H1 (cell line): ENCODE measurements at regions of chr17 and their contacts with region 1.

Region 1: GRCh38 chr17:164303-165235 is 16.9 kb downstream of the DOC2B start:
- DNase-seq: peak in 1 of 2 experiments; percentile 66
- H3K4me3 ChIP-seq: no peak overlapping the region
- H3K27ac ChIP-seq: no peak overlapping the region
- H3K4me1 ChIP-seq: no peaks in the 10 kb centered on the region; a peak in 1 of 7 replicates
- H3K27me3 ChIP-seq: no peaks in the 10 kb centered on the region
- CTCF ChIP-seq: peak; percentile 68 to 79 (median 71)
- EP300 ChIP-seq: no peak
- POLR2A ChIP-seq: no peak
- RAD21 ChIP-seq: peak; percentile 87 to 88

Region 2: DNA sequence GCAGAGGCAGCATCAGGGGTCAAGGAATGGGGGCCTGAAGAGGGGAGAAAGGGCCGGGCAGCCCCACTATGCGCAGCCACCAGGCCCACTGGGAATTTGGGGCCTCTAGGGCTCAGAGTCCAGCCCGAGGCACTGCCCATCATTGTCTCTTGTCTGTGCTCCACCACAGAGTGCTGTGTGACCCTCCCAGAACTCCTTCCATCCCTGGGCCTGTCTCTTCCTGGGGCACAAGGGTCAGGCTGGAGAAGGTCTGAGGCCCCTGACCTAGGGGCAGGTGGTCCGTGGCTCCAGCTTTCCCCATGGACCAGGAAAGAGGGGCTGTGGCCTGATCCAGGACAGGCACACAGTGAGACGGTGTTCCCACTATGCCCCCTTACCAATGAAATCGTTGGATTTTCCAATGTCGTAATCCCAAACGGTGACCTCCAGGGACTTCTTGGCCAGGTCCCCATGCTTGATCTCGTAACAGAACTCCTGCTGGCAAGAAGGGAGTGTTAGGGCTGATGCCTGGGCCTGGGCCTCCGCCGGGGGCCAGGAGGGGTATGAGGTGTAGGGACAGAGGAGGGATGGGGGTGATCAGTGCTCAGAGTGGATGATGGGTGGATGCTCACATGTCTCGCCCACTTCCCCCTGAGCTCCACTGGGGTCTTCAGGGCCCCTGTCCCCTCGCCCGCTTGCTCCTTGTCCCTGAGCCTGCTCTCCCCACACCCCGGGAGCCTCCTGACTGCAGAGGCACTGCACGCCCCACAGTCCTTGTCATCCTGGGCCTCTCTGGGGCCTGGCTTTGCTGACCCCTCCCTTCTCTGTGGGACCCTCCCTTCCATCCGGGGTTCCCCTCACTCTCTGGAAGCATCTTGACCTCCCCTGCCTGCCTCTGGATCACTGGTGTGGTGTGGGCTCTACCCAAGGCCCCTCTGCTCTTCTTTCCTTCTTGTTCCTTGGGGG is 16.5 kb before region 1 on chr17:
- CTCF ChIA-PET with region 1: interaction called, 20 read pairs
- POLR2A ChIA-PET with region 1: no interaction called
- DNase-seq: peak in 1 of 2 experiments; percentile 32
- H3K4me3 ChIP-seq: no peak overlapping the region
- H3K27ac ChIP-seq: no peak overlapping the region
- H3K4me1 ChIP-seq: peaks cover 0 to 2% (median 0%) of the 10 kb centered on the region in 4 experiments; a peak in 1 of 7 replicates
- H3K27me3 ChIP-seq: peaks cover 1 to 7% (median 5%) of the 10 kb centered on the region in 4 experiments; a peak in 5 of 7 replicates
- CTCF ChIP-seq: no peak
- EP300 ChIP-seq: no peak
- POLR2A ChIP-seq: no peak
- RAD21 ChIP-seq: no peak

Region 3: DNA sequence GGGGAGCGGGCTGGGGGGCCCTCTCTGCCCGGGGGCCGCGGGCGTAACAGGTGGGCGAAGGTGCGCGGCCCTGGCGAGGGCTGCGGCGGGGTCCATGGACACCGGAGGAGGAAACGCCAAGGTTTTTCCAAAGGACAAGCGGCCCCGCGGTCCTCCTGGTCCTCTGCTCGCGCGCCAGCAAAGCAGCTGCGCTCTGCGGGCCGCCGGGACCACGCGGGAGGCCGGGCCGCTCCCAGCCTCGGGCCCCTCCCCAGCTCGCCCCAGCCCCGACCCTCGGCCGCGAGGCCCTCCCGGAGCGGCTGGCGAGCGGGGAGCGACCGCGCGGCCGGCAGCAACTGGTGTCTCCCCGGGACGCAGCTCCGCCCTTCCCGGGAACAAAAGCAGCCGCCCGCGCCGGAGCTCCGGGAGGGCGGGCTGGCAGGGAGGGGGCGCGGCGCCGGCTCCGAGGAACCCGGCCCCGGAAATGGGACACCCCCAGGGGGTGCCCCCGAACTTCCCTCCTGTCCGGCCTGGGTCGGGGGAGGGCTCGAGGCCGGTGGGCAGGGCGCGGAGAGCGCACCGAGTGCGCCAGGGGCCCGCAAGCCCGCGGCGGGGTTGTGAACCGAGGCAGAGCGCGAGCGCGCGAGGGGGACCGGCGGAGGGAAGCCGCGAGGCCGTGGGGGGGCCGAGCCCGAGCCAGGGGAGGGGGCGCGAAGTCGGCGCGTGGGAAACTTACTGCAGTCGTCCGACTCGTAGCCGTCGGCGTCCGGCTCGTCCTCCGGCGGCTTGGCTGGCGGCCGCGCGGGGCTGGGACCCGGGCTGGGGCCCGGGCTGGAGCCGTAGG is 16.0 kb after region 1 on chr17:
- CTCF ChIA-PET with region 1: interaction called, 11 read pairs
- POLR2A ChIA-PET with region 1: interaction called, 5 read pairs
- DNase-seq: peak in 1 of 2 experiments; percentile 70
- H3K4me3 ChIP-seq: peak overlapping the region; percentile 30 to 73 (median 45)
- H3K27ac ChIP-seq: no peak overlapping the region
- H3K4me1 ChIP-seq: peaks cover 0 to 15% (median 10%) of the 10 kb centered on the region in 4 experiments; a peak in 6 of 7 replicates
- H3K27me3 ChIP-seq: peaks cover 19 to 62% (median 42%) of the 10 kb centered on the region in 4 experiments
- CTCF ChIP-seq: no peak
- EP300 ChIP-seq: no peak
- POLR2A ChIP-seq: no peak
- RAD21 ChIP-seq: no peak

Region 4: GRCh38 chr17:192666-193410 is 28.3 kb after region 1 on chr17:
- CTCF ChIA-PET with region 1: no interaction called
- POLR2A ChIA-PET with region 1: no interaction called
- DNase-seq: no peak
- H3K4me3 ChIP-seq: no peak overlapping the region
- H3K27ac ChIP-seq: no peak overlapping the region
- H3K4me1 ChIP-seq: peaks cover 0 to 3% (median 0%) of the 10 kb centered on the region in 4 experiments; a peak in 1 of 7 replicates
- H3K27me3 ChIP-seq: no peaks in the 10 kb centered on the region; a peak in 1 of 7 replicates
- CTCF ChIP-seq: no peak
- EP300 ChIP-seq: no peak
- POLR2A ChIP-seq: no peak
- RAD21 ChIP-seq: no peak

Region 5: DNA sequence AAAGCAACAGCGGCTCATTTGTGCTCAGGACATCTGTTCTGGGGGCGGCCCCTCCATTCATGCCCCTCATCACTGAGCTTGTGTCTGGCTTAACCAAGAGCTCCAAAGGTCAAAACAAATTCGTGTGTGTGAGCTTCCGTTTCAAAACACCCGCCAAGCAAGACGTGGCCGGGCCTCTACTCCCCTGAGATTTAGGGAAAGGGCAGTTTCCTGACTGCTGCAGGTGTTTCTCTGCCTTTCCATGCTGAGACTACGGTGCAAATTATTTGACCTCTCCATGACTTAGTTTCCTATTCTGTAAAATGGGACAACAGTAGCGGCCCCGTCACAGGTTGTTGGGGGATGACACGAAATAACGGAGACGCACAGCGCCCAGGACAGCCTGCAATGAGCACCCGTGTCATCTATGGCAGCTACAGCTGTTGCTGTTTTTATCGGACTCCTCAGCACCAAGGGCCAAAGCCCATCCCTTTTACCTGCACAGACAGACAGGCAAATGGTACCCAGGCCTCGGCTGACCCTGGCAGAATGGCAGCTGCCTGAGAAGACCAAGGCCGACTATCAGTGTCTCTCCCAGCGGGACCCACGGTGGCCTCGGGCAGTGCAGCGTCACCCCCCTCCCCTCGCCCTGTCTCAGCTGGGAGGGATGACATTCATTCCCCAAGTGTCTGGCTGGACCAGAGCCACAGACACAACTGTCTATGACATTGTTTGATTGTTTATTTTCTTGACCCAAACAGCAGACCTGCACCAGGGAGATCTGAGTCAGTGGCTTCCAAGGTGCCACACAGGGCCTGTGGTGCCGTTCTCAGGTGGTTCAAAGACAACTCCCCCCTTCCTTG is 67.6 kb after region 1 on chr17:
- CTCF ChIA-PET with region 1: interaction called, 11 read pairs
- POLR2A ChIA-PET with region 1: no interaction called
- DNase-seq: peak in 1 of 2 experiments; percentile 29
- H3K4me3 ChIP-seq: no peak overlapping the region
- H3K27ac ChIP-seq: no peak overlapping the region
- H3K4me1 ChIP-seq: peaks cover 0 to 26% (median 5%) of the 10 kb centered on the region in 4 experiments; a peak in 5 of 7 replicates
- H3K27me3 ChIP-seq: no peaks in the 10 kb centered on the region
- CTCF ChIP-seq: no peak
- EP300 ChIP-seq: no peak
- POLR2A ChIP-seq: no peak
- RAD21 ChIP-seq: no peak

Region 6: GRCh38 chr17:309361-309888 is 144.9 kb after region 1 on chr17:
- CTCF ChIA-PET with region 1: interaction called, 21 read pairs
- POLR2A ChIA-PET with region 1: no interaction called
- DNase-seq: peak; percentile 27 to 82
- H3K4me3 ChIP-seq: no peak overlapping the region
- H3K27ac ChIP-seq: no peak overlapping the region
- H3K4me1 ChIP-seq: peaks cover 4 to 26% (median 21%) of the 10 kb centered on the region in 4 experiments
- H3K27me3 ChIP-seq: peaks cover 0 to 1% (median 0%) of the 10 kb centered on the region in 4 experiments; a peak in 1 of 7 replicates
- CTCF ChIP-seq: peak; percentile 51 to 98 (median 79)
- EP300 ChIP-seq: no peak
- POLR2A ChIP-seq: no peak
- RAD21 ChIP-seq: peak; percentile 40 to 63; a peak in 3 of 4 replicates

Region 7: GRCh38 chr17:385926-386876 is 221.6 kb after region 1 on chr17:
- CTCF ChIA-PET with region 1: interaction called, 15 read pairs
- POLR2A ChIA-PET with region 1: no interaction called
- DNase-seq: peak in 1 of 2 experiments; percentile 92
- H3K4me3 ChIP-seq: peak overlapping the region; percentile 2 to 58 (median 22); a peak in 6 of 8 replicates
- H3K27ac ChIP-seq: no peak overlapping the region
- H3K4me1 ChIP-seq: peaks cover 5 to 26% (median 18%) of the 10 kb centered on the region in 4 experiments; a peak in 6 of 7 replicates
- H3K27me3 ChIP-seq: peaks cover 9 to 24% (median 22%) of the 10 kb centered on the region in 4 experiments
- CTCF ChIP-seq: peak; percentile 48 to 76 (median 69)
- EP300 ChIP-seq: 0 out of 3 replicates have a peak, but pooled peaks of 1 of the 2 experiments have one; percentile 24
- POLR2A ChIP-seq: no peak
- RAD21 ChIP-seq: peak; percentile 61 to 81

Region 8: GRCh38 chr17:700504-701094 is 536.0 kb after region 1 on chr17:
- CTCF ChIA-PET with region 1: interaction called, 15 read pairs
- POLR2A ChIA-PET with region 1: no interaction called
- DNase-seq: no peak
- H3K4me3 ChIP-seq: no peak overlapping the region
- H3K27ac ChIP-seq: no peak overlapping the region
- H3K4me1 ChIP-seq: no peaks in the 10 kb centered on the region
- H3K27me3 ChIP-seq: no peaks in the 10 kb centered on the region
- CTCF ChIP-seq: peak in 2 of 3 experiments; percentile 8 to 25; a peak in 2 of 4 replicates
- EP300 ChIP-seq: no peak
- POLR2A ChIP-seq: no peak
- RAD21 ChIP-seq: peak in 1 of 2 experiments; percentile 68; a peak in 3 of 4 replicates